ENCODE measurements at regions of chr1 and their contacts with region 1.

Region 1: DNA sequence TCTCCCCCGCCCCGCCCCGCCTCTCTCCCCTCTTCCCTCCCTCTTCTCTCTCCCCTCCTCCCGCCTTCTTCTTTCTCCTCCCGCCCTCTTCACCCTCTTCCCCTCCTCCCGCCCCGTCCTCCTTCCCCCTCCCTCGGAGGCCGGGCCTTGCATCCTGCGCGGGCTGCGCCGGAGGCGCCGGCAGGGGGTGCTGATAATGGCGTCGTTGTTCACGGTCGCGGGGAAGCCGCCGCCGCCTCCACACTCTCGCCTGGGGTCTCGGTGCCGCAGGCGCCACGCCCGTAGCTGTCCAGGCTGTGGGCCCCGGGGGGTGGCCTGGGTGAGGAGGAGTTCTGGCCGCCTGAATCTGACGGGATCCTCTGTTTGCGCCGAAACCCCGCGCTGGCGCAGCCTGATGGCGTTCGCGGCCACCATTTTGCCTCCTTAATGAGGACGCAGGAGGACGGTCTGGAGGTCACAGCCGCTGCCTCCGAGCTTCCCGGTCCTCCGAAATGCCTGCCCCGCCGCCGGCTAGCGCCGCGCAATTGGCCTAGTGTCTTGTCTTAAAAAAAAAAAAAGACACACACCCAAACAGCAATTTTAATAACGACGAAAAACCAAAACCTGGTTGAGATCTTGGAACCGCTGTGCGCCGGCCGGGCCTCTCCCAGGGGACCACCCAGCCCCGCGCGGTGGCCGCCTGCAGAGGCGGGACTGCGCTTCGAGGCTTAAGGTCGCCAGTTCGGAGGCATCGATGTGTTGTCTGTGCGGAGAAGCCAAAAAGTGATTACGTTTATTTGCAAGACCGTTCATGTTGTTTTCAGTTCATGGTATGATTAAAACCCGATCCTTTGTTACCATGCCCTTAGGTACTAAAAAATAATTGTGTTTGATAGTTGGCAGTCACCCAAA is 106.6 kb upstream of the HNRNPU start:
- DNase-seq: peak; percentile 95 to 99 (median 98)
- ATAC-seq: peak; percentile 90
- H3K4me3 ChIP-seq: peak overlapping the region; percentile 58 to 76
- H3K27ac ChIP-seq: peak overlapping the region; percentile 100
- H3K4me1 ChIP-seq: peaks cover 9 to 18% of the 10 kb centered on the region in 2 donors
- H3K27me3 ChIP-seq: no peaks in the 10 kb centered on the region
- CTCF ChIP-seq: peak; percentile 37 to 71

Region 2: DNA sequence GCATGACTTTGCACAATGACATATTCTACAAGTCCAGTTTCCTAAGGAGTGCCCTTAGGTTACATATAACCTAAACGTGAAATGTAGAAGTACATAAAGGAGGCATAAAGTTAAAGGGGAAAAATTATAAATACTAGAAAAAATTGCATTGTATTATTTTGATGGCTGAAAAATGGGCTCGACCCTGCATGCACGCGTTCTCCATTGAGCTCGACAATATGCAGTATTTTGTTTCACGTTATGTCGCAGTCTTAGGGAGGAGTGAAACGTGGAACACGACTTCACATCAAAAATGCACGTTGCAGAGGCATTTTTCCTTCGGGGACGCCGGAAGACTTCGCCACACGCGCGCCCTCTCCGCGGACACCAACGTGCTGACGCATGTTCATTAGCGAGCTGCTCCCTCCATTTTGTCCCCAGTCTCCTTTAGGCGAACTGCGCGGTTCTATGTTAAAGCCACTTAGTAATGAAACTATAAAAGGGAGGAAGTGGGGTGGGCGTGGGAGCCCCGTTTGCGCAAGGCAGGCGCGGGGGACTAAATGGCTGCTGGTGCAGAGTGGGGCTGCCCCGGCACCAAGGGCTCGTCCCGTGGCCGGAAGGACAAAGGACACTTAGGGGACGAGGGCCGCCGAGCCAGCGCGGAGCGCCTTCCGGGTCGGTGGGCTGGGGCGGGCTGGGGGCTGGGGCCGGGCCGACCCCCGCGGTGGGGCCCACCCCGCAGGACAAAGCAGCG is 136.2 kb before region 1 on chr1:
- intact Hi-C with region 1: loop called in 1 of 2 experiments (anchors 5 kb)
- DNase-seq: peak; percentile 90 to 97 (median 96)
- ATAC-seq: peak; percentile 59
- H3K4me3 ChIP-seq: peak overlapping the region; percentile 64 to 74
- H3K27ac ChIP-seq: peak overlapping the region; percentile 95 to 99
- H3K4me1 ChIP-seq: peaks cover 16 to 47% of the 10 kb centered on the region in 2 donors
- H3K27me3 ChIP-seq: no peaks in the 10 kb centered on the region
- CTCF ChIP-seq: no peak

Region 3: DNA sequence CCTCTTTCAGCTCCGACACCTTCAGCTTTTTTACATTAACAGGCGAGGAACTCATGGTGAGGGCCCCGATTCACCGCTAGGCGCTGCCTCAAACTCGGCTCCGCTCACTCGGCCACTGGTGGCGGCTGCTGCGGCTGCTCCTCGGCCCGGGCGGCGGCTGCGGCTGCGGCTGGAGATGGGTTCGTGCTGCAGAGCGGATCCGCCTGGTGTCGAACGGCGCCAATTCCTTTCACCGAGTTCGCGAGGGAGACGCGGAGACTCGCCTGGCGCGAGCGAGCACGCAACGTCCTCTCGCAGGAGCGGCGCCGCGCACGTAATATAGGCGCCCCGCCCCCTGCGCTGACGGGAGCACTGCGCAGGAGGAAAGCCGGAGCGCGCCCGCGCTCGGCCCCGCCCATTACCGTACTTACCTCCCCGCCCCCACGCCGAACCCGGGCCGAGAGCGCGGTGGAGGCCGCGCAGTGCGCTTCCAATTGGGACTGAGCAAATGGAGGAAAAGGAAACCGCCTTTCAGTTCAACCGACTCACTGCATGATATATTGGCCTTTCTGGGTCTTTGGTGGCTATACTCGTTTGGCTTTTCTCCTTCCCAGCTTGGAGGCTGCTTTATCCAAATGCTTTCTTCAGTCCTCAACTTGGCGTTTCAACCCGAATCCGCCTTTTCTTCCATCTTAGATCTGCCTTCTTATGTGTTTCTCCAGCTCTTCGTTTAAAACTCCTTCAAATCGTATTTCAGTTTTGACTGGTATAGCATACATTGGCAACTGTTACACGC is 106.5 kb before region 1 on chr1 and contains the start of gene HNRNPU:
- intact Hi-C with region 1: loop called in 1 of 2 experiments (anchors 10 kb)
- DNase-seq: peak; percentile 96 to 99 (median 99)
- ATAC-seq: peak; percentile 92
- H3K4me3 ChIP-seq: peak within 1 kb of the TSS; percentile 95 to 98
- H3K27ac ChIP-seq: peak within 1 kb of the TSS; percentile 100
- H3K4me1 ChIP-seq: peaks cover 25 to 47% of the 10 kb centered on the region in 2 donors
- H3K27me3 ChIP-seq: no peaks in the 10 kb centered on the region
- CTCF ChIP-seq: peak; percentile 13 to 15
- polyA plus RNA-seq, gene HNRNPU: 583 to 663 (median 621) TPM